CD8-positive, alpha-beta T cell (primary cell): ENCODE measurements at regions of chr18 and their contacts with region 1.

Region 1: GRCh38 chr18:70671889-70672565 is 383.2 kb downstream of the SOCS6 start:
- DNase-seq: peak in 7 of 9 experiments; percentile 2 to 63 (median 43)
- ATAC-seq: peak; percentile 54
- H3K4me3 ChIP-seq: peak overlapping the region in 1 of 2 experiments; percentile 14
- H3K4me3 Mint-ChIP-seq: peak overlapping the region; percentile 18
- H3K27ac ChIP-seq: peak overlapping the region; percentile 77 to 79
- H3K27ac Mint-ChIP-seq: peak overlapping the region; percentile 92
- H3K4me1 ChIP-seq: peaks cover 58% of the 10 kb centered on the region
- H3K4me1 Mint-ChIP-seq: peaks cover 56% of the 10 kb centered on the region
- H3K27me3 ChIP-seq: no peaks in the 10 kb centered on the region
- H3K27me3 Mint-ChIP-seq: no peaks in the 10 kb centered on the region
- CTCF ChIP-seq: no peak

Region 2: DNA sequence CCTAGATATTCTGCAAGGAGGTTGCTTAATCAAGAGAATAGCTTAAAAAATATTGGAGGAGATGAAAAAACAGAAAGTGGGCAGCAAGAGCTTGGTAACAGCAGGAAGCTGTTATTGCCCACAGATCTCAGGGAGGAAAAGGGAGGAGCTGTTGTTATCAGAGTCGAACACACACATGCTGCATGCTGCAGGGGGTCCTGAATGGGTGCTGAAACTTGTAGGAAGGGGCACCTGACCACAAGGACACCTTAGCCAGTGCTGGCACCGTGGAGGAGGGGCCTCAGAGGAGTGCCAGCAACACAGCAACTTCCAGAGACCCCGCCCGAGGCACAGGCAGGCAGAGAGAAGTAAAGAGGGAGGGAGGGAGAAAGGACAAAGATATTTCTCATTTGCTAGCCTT is 50.3 kb before region 1 on chr18:
- CTCF ChIA-PET with region 1: interaction called, 9 read pairs
- POLR2A ChIA-PET with region 1: interaction called, 16 read pairs
- intact Hi-C with region 1: loop called in 1 of 2 experiments (anchors 5 kb)
- DNase-seq: peak in 8 of 9 experiments; percentile 22 to 77 (median 37)
- ATAC-seq: peak; percentile 86
- H3K4me3 ChIP-seq: peak overlapping the region; percentile 17 to 36
- H3K4me3 Mint-ChIP-seq: peak overlapping the region; percentile 87
- H3K27ac ChIP-seq: peak overlapping the region; percentile 63 to 67
- H3K27ac Mint-ChIP-seq: peak overlapping the region; percentile 100
- H3K4me1 ChIP-seq: peaks cover 70% of the 10 kb centered on the region
- H3K4me1 Mint-ChIP-seq: peaks cover 82% of the 10 kb centered on the region
- H3K27me3 ChIP-seq: no peaks in the 10 kb centered on the region
- H3K27me3 Mint-ChIP-seq: no peaks in the 10 kb centered on the region
- CTCF ChIP-seq: no peak

Region 3: GRCh38 chr18:70659036-70659925 is 12.7 kb before region 1 on chr18:
- CTCF ChIA-PET with region 1: interaction called, 4 read pairs
- POLR2A ChIA-PET with region 1: interaction called, 6 read pairs
- intact Hi-C with region 1: loop called in 1 of 2 experiments (anchors 2 kb)
- DNase-seq: peak; percentile 29 to 87 (median 63)
- ATAC-seq: peak; percentile 92
- H3K4me3 ChIP-seq: peak overlapping the region in 1 of 2 experiments; percentile 20
- H3K4me3 Mint-ChIP-seq: peak overlapping the region; percentile 40
- H3K27ac ChIP-seq: peak overlapping the region; percentile 52 to 59
- H3K27ac Mint-ChIP-seq: peak overlapping the region; percentile 91
- H3K4me1 ChIP-seq: peaks cover 67% of the 10 kb centered on the region
- H3K4me1 Mint-ChIP-seq: peaks cover 54% of the 10 kb centered on the region
- H3K27me3 ChIP-seq: no peaks in the 10 kb centered on the region
- H3K27me3 Mint-ChIP-seq: no peaks in the 10 kb centered on the region
- CTCF ChIP-seq: no peak

Region 4: DNA sequence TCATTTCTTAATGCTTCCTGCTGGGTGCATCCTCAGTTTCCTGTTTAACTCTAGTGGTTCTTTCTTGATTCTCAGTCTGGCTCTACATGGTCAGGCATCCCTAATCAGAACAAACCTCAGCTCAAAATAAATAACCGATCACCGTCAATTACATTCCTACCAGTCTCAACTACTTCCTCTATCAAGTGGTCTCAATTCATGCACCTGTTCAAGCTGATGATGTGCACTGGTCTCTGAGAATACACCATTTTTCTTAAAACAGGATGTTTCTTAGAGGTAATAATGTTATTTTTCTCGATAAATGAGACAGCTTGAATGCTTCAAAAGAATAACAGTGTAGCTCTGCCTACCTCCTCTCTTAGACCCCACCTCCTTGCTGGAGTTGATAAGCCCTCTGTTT is 37.7 kb after region 1 on chr18:
- CTCF ChIA-PET with region 1: no interaction called
- POLR2A ChIA-PET with region 1: interaction called, 3 read pairs
- intact Hi-C with region 1: loop called in 1 of 2 experiments (anchors 5 kb)
- DNase-seq: no peak
- ATAC-seq: peak; percentile 17
- H3K4me3 ChIP-seq: no peak overlapping the region
- H3K4me3 Mint-ChIP-seq: no peak overlapping the region
- H3K27ac ChIP-seq: no peak overlapping the region
- H3K27ac Mint-ChIP-seq: peak overlapping the region; percentile 41
- H3K4me1 ChIP-seq: no peaks in the 10 kb centered on the region
- H3K4me1 Mint-ChIP-seq: peaks cover 20% of the 10 kb centered on the region
- H3K27me3 ChIP-seq: no peaks in the 10 kb centered on the region
- H3K27me3 Mint-ChIP-seq: no peaks in the 10 kb centered on the region
- CTCF ChIP-seq: no peak